Activated CD4-positive, alpha-beta T cell treated with anti-CD3 and anti-CD28 coated beads, Interleukin-2, amount 10 ng/mL, durations not matched to agents 24 days and 14 days (primary cell): ENCODE measurements at regions of chr1 and their contacts with region 1.

Region 1: DNA sequence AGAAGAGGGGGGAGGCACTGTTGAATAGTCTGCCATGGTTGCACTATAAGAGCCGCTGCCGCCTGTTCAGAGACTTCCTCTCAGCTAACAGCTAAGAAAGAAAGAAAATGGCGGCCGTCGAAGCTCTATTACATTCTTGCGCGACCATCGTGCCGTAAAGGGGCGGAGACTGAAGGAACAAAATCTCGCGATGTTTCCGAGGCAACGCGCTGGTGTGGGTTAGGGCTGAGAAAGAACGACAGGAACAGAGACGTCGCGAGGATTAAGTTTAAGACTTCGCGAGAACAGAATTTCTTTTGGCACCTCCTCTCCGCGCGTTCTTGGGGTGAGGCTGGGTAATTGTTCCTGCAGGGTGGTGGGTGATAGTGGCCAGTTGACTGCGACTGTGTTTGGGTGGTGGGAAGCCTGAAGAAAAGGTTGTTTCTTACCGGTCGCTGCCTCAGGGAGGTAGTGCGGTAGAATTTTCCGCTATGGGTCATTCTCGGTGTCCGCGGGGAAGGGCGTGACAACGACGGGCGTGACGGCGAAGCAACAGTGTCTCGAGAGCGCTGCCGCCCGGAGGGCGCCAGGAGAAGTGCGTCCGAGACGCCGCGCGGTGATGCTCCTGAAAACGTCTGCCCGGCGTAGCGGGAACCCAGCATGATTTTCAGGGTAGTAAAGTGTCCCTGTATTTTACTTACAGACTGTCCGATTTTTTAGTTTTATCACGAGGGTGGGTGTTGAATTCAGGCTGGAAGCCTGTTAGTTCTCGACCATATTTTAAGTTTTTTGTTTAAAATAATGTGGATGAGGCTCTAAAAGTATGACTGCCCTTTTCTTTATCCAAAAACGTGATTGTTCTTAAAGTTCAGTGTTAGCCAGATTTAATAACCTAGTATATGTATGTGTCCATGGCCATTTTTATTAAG is at the start of gene FUBP1:
- DNase-seq: peak; percentile 99
- H3K4me3 Mint-ChIP-seq: no peak within 1 kb of the TSS
- H3K27ac Mint-ChIP-seq: no peak within 1 kb of the TSS
- H3K4me1 Mint-ChIP-seq: peaks cover 36% of the 10 kb centered on the region
- H3K27me3 Mint-ChIP-seq: no peaks in the 10 kb centered on the region
- total RNA-seq, gene FUBP1: 278 and 284 TPM in 2 replicates

Region 2: GRCh38 chr1:77759071-77760028 is 219.9 kb before region 1 on chr1 and contains the start of gene USP33:
- intact Hi-C with region 1: loop called (anchors 1 kb)
- DNase-seq: peak; percentile 98
- H3K4me3 Mint-ChIP-seq: peak within 1 kb of the TSS; percentile 95
- H3K27ac Mint-ChIP-seq: peak within 1 kb of the TSS; percentile 96
- H3K4me1 Mint-ChIP-seq: peaks cover 27% of the 10 kb centered on the region
- H3K27me3 Mint-ChIP-seq: peaks cover 2% of the 10 kb centered on the region
- total RNA-seq, gene USP33: 39.9 and 47.4 TPM in 2 replicates

Region 3: GRCh38 chr1:77779529-77780281 is 199.5 kb before region 1 on chr1 and contains the start of gene MIGA1:
- intact Hi-C with region 1: loop called (anchors 1 kb)
- DNase-seq: peak; percentile 96
- H3K4me3 Mint-ChIP-seq: peak within 1 kb of the TSS; percentile 97
- H3K27ac Mint-ChIP-seq: peak within 1 kb of the TSS; percentile 88
- H3K4me1 Mint-ChIP-seq: peaks cover 24% of the 10 kb centered on the region
- H3K27me3 Mint-ChIP-seq: no peaks in the 10 kb centered on the region
- total RNA-seq, gene MIGA1: 7.5 and 7.6 TPM in 2 replicates

Region 4: DNA sequence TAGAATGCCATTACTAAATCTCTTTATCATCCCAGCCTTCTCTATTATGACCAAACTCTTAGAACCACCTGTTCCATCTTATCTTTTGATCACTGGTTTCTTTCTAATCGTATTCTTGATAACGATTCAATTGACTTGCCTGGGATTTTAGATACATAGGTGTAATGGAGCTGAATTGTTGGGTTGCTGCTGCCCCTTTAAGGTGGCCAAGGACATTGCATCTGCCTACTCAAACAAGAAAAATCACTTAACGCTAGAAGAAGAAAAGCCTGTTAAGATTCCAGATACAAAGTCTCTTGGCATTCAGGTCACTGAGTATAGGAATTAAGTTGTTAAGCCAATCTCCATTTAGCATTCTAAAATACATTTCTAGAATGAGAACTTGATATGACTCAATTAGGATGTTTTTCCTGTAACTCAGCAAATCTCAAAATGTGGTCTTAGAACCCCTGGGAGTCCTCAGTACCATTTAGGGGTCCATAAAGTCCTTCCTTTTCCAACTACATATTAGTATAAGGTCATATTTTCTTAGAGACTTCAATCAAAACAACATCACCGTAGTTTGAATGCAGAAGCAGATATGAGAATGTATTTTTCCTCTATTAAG is 78.4 kb before region 1 on chr1:
- intact Hi-C with region 1: no loop called
- DNase-seq: peak; percentile 60
- H3K4me3 Mint-ChIP-seq: no peak overlapping the region
- H3K27ac Mint-ChIP-seq: no peak overlapping the region
- H3K4me1 Mint-ChIP-seq: no peaks in the 10 kb centered on the region
- H3K27me3 Mint-ChIP-seq: peaks cover 4% of the 10 kb centered on the region

Region 5: DNA sequence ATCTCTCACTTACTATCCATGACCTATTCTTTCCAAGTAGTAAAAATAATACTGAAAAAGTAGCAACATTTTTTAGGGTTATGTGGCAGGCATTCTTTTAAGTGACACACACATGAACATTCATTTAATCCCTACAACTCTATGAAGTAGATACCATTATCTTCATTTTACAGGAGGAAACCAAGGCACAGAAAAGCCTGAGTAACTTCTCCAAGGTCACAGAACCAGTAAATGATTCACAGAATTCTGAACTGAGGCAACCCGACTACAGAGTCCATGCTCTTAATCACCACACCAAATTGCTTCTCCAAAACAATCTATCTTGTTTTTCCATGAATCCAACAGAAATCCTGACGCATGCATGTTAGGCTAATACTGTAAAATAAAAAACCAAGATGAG is 17.8 kb before region 1 on chr1:
- intact Hi-C with region 1: loop called (anchors 2 kb)
- DNase-seq: no peak
- H3K4me3 Mint-ChIP-seq: no peak overlapping the region
- H3K27ac Mint-ChIP-seq: peak overlapping the region; percentile 61
- H3K4me1 Mint-ChIP-seq: peaks cover 25% of the 10 kb centered on the region
- H3K27me3 Mint-ChIP-seq: no peaks in the 10 kb centered on the region

Region 6: GRCh38 chr1:78114034-78114956 is 135.1 kb after region 1 on chr1:
- intact Hi-C with region 1: loop called (anchors 2 kb)
- DNase-seq: peak; percentile 89
- H3K4me3 Mint-ChIP-seq: no peak overlapping the region
- H3K27ac Mint-ChIP-seq: no peak overlapping the region
- H3K4me1 Mint-ChIP-seq: peaks cover 3% of the 10 kb centered on the region
- H3K27me3 Mint-ChIP-seq: peaks cover 3% of the 10 kb centered on the region

Region 7: GRCh38 chr1:78348496-78349284 is 369.5 kb after region 1 on chr1:
- intact Hi-C with region 1: no loop called
- DNase-seq: no peak
- H3K4me3 Mint-ChIP-seq: no peak overlapping the region
- H3K27ac Mint-ChIP-seq: no peak overlapping the region
- H3K4me1 Mint-ChIP-seq: no peaks in the 10 kb centered on the region
- H3K27me3 Mint-ChIP-seq: no peaks in the 10 kb centered on the region

Region 8: GRCh38 chr1:78617615-78618026 is 638.4 kb after region 1 on chr1:
- intact Hi-C with region 1: loop called (anchors 10 kb)
- DNase-seq: peak; percentile 90
- H3K4me3 Mint-ChIP-seq: peak overlapping the region; percentile 43
- H3K27ac Mint-ChIP-seq: peak overlapping the region; percentile 19
- H3K4me1 Mint-ChIP-seq: peaks cover 34% of the 10 kb centered on the region
- H3K27me3 Mint-ChIP-seq: peaks cover 9% of the 10 kb centered on the region

Region 9: DNA sequence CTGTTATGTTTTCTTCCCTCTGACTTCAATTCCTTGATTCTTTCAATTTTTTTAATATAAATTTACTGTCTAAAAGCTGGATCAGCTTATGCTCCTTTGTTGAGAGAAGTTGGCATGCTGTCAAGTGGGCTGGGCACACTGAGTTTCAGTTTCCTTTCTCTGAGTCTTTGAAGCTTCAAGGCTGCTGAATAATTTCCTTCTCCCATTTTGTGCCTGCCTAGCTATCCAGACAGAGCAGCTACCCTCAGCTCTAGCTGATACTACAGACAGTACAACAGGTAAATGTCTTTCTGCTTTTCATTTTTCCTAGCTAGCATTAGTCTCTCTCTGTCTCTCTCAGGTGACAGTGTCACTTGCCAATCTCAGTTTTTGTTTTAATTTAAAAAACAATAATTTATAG is 670.4 kb after region 1 on chr1 and contains the start of gene IFI44:
- intact Hi-C with region 1: loop called (anchors 2 kb)
- DNase-seq: peak; percentile 91
- H3K4me3 Mint-ChIP-seq: peak within 1 kb of the TSS; percentile 95
- H3K27ac Mint-ChIP-seq: peak within 1 kb of the TSS; percentile 92
- H3K4me1 Mint-ChIP-seq: peaks cover 55% of the 10 kb centered on the region
- H3K27me3 Mint-ChIP-seq: no peaks in the 10 kb centered on the region
- total RNA-seq, gene IFI44: 20.4 and 27.6 TPM in 2 replicates